Calu3 (cell line): ENCODE measurements at regions of chr15 and their contacts with region 1.

Region 1: DNA sequence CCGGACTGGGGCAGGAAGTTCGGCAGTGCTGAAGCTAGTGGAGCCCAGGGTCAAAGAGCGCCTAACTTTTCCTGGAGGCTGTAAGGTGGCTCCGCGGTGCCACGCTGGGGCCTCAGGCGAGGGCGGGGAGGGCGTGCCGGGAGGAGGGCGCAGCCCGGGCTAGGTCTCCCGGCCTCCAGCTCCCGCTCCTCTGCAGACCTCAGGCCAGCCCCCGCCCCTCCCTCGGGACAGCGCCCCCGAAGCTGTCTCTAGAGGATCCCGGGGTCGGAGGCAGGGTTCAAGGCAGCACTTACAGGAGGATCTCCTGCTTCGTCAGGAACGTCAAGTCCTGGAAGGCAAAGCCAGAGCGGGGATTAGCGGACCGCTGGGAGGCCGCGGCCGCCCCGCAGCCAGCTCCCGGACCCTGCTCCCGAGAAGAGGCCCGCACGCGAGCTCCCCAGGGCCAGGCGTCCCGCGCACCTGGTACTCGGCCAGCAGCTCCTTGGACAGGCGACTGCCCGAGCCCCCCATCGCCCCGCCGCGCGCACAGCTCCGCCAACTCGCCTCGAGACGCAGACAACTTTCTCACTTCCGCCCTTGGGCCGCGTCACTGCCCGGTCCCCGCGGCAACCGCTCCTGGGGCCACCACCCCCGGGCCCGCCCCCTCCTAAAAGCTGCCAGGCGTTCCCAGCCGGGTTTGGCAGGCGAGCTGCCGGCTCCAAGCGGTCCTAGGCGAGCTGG is at the start of gene CIB1:
- DNase-seq: peak; percentile 99
- H3K4me3 Mint-ChIP-seq: peak within 1 kb of the TSS; percentile 77
- H3K27ac Mint-ChIP-seq: peak within 1 kb of the TSS; percentile 77
- H3K4me1 Mint-ChIP-seq: peaks cover 30% of the 10 kb centered on the region
- H3K27me3 Mint-ChIP-seq: no peaks in the 10 kb centered on the region
- CTCF ChIP-seq: peak; percentile 49
- total RNA-seq, gene CIB1: 82.8 and 86.7 TPM in 2 replicates

Region 2: DNA sequence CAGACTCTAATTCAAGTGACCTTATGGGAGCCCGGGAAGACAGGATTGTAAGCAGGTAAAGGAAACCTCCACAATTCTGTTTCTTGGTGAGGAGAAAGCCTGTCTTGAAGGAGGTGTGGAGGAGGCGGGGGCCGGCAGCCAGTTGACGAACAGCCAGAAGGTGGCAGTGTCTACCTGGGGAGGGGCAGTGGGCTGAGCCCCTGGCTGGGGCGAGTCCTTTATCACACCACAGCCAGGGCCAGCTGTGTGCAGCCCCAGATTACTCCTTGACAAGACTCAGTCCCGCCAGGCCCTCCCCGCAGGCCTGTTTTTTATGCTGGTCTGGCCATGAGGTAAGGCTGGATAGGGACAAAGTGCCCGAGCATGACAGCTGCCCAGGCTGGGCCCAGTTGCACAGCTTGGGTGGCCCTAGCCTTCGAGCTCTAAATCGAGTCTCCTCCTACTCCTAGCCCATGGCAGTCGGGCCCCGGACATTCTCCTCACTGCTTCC is 90.3 kb before region 1 on chr15:
- CTCF ChIA-PET with region 1: interaction called, 18 read pairs
- intact Hi-C with region 1: no loop called
- DNase-seq: peak; percentile 91
- H3K4me3 Mint-ChIP-seq: no peak overlapping the region
- H3K27ac Mint-ChIP-seq: no peak overlapping the region
- H3K4me1 Mint-ChIP-seq: no peaks in the 10 kb centered on the region
- H3K27me3 Mint-ChIP-seq: no peaks in the 10 kb centered on the region
- CTCF ChIP-seq: peak; percentile 95

Region 3: DNA sequence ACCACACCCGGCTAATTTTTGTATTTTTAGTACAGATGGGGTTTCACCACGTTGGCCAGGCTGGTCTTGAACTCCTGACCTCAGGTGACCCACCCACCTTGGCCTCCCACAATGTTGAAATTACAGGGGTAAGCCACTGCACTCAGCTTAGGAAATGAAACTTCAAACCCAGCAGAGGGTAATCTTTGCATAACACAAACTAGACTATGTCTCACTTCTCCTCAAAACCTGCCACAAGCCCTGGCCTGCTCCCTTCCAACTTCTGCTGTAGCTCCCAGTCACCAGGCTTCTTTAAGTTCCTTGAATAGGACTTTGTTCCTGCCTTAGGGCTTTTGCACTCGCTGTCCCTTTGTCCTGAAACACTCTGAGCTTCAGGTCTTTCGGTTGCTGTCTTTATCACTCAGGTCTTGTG is 71.6 kb before region 1 on chr15:
- CTCF ChIA-PET with region 1: interaction called, 14 read pairs
- intact Hi-C with region 1: no loop called
- DNase-seq: no peak
- H3K4me3 Mint-ChIP-seq: no peak overlapping the region
- H3K27ac Mint-ChIP-seq: peak overlapping the region; percentile 22
- H3K4me1 Mint-ChIP-seq: peaks cover 82% of the 10 kb centered on the region
- H3K27me3 Mint-ChIP-seq: no peaks in the 10 kb centered on the region
- CTCF ChIP-seq: no peak

Region 4: GRCh38 chr15:90221246-90221900 is 12.2 kb before region 1 on chr15:
- CTCF ChIA-PET with region 1: interaction called, 28 read pairs
- intact Hi-C with region 1: no loop called
- DNase-seq: peak; percentile 85
- H3K4me3 Mint-ChIP-seq: no peak overlapping the region
- H3K27ac Mint-ChIP-seq: no peak overlapping the region
- H3K4me1 Mint-ChIP-seq: peaks cover 18% of the 10 kb centered on the region
- H3K27me3 Mint-ChIP-seq: no peaks in the 10 kb centered on the region
- CTCF ChIP-seq: peak; percentile 74

Region 5: DNA sequence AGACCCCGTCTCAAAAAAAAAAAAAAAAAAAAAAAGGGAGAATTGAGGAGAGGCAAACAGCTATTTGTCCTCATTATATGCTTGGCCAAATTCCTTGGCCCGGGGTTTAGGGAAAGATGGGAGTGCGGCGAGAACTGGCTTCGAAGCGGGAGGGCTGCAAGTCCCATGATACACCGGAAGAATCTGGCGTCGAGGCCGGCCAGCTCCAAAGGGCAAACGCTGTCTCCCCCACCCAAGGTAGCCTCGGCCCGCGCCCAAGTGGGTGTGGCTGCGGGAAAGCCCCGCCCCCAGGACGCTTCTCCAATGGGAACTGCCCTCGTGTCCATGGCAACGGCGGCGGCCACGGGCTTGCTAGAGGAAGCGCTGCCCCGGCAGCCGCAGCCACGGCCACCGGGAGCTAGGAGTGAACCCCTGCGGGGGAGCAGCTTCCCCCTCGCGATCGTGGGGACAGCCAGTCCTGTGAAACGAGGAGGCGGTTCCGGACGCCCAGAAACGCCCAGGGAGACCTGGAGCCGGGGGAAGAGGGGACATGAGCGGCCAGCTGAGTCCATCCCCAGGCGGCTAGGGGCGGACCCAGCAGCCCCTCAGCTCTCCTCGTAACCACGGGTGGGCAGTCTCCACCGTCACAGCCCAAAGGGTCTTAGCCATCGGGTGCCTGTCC is 15.8 kb after region 1 on chr15 and contains the start of gene TTLL13:
- CTCF ChIA-PET with region 1: interaction called, 13 read pairs
- intact Hi-C with region 1: no loop called
- DNase-seq: peak; percentile 93
- H3K4me3 Mint-ChIP-seq: peak within 1 kb of the TSS; percentile 98
- H3K27ac Mint-ChIP-seq: peak within 1 kb of the TSS; percentile 91
- H3K4me1 Mint-ChIP-seq: peaks cover 24% of the 10 kb centered on the region
- H3K27me3 Mint-ChIP-seq: no peaks in the 10 kb centered on the region
- CTCF ChIP-seq: no peak
- total RNA-seq, gene TTLL13: 0.29 and 0.71 TPM in 2 replicates

Region 6: GRCh38 chr15:90265271-90266060 is 31.9 kb after region 1 on chr15 and contains the start of gene NGRN:
- CTCF ChIA-PET with region 1: interaction called, 3 read pairs
- intact Hi-C with region 1: loop called (anchors 2 kb)
- DNase-seq: peak; percentile 94
- H3K4me3 Mint-ChIP-seq: peak within 1 kb of the TSS; percentile 99
- H3K27ac Mint-ChIP-seq: peak within 1 kb of the TSS; percentile 93
- H3K4me1 Mint-ChIP-seq: peaks cover 40% of the 10 kb centered on the region
- H3K27me3 Mint-ChIP-seq: no peaks in the 10 kb centered on the region
- CTCF ChIP-seq: no peak
- total RNA-seq, gene NGRN: 110 and 114 TPM in 2 replicates